CD4-positive, alpha-beta memory T cell (primary cell): ENCODE measurements at regions of chr4 and their contacts with region 1.

Region 1: GRCh38 chr4:145936142-145936996 is 2.3 kb downstream of the ZNF827 start:
- DNase-seq: peak; percentile 62 to 83 (median 66)
- H3K4me3 ChIP-seq: peak overlapping the region; percentile 69 to 73
- H3K4me3 Mint-ChIP-seq: peak overlapping the region; percentile 91 to 99 (median 95)
- H3K27ac ChIP-seq: peak overlapping the region; percentile 39
- H3K27ac Mint-ChIP-seq: peak overlapping the region; percentile 86 to 95 (median 91)
- H3K4me1 ChIP-seq: peaks cover 15% of the 10 kb centered on the region
- H3K4me1 Mint-ChIP-seq: peaks cover 19 to 44% (median 27%) of the 10 kb centered on the region in 4 donors
- H3K27me3 ChIP-seq: no peaks in the 10 kb centered on the region
- H3K27me3 Mint-ChIP-seq: peaks cover 3 to 5% of the 10 kb centered on the region in 2 donors

Region 2: DNA sequence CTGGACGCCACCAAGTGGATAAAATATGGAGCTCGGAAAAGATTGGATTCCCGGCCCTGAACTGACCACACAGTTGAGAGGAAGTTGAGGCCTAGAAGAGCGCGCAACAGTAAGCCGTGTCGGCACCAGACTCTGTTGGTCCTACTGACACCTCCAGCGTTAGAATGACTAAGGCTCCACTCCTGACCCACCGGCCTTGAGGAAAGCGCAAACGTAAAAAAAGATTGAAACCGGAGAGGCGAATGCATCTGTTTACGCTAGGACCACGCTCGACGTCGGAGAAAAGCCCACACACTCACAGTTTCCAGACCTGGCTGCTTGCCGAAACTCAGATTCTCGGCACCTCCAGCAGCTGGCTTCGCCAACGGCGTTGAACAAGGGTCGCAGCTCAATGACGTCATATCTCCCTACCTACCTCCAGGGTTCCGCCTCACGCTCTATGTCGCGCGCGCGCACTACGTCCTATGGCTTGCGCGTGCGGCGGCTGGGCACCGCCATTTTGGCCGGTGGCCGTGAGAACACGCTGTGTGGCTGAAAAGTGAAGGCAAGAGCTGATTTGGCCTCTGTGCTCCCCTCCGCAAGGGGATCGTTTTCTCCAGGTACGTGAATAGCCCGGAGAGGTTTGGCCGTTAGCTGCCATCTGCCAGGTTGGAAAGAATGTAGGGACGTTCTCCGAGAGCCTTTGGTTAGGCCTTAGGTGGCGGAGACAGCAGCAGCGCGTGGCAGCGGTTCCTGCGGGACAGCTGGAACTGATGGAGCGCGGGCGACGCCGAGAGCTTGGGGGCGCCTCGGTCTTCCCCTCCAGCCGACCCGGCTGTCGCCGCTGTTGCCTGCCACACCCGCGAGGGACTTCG is 838.3 kb before region 1 on chr4 and contains the starts of genes ABCE1 and ANAPC10:
- CTCF ChIA-PET with region 1: no interaction called
- POLR2A ChIA-PET with region 1: interaction called, 5 read pairs
- intact Hi-C with region 1: loop called (anchors 2 kb)
- DNase-seq: peak; percentile 92 to 98 (median 95)
- H3K4me3 ChIP-seq: peak within 1 kb of the TSS; percentile 82 to 96
- H3K4me3 Mint-ChIP-seq: peak within 1 kb of the TSS; percentile 91 to 98 (median 97)
- H3K27ac ChIP-seq: peak within 1 kb of the TSS; percentile 83
- H3K27ac Mint-ChIP-seq: peak within 1 kb of the TSS; percentile 97 to 99 (median 99)
- H3K4me1 ChIP-seq: peaks cover 52% of the 10 kb centered on the region
- H3K4me1 Mint-ChIP-seq: peaks cover 20 to 47% (median 35%) of the 10 kb centered on the region in 4 donors
- H3K27me3 ChIP-seq: no peaks in the 10 kb centered on the region
- H3K27me3 Mint-ChIP-seq: no peaks in the 10 kb centered on the region
- total RNA-seq, gene ABCE1: 67.9 to 71.4 TPM
- total RNA-seq, gene ANAPC10: 14.8 to 15.7 TPM

Region 3: DNA sequence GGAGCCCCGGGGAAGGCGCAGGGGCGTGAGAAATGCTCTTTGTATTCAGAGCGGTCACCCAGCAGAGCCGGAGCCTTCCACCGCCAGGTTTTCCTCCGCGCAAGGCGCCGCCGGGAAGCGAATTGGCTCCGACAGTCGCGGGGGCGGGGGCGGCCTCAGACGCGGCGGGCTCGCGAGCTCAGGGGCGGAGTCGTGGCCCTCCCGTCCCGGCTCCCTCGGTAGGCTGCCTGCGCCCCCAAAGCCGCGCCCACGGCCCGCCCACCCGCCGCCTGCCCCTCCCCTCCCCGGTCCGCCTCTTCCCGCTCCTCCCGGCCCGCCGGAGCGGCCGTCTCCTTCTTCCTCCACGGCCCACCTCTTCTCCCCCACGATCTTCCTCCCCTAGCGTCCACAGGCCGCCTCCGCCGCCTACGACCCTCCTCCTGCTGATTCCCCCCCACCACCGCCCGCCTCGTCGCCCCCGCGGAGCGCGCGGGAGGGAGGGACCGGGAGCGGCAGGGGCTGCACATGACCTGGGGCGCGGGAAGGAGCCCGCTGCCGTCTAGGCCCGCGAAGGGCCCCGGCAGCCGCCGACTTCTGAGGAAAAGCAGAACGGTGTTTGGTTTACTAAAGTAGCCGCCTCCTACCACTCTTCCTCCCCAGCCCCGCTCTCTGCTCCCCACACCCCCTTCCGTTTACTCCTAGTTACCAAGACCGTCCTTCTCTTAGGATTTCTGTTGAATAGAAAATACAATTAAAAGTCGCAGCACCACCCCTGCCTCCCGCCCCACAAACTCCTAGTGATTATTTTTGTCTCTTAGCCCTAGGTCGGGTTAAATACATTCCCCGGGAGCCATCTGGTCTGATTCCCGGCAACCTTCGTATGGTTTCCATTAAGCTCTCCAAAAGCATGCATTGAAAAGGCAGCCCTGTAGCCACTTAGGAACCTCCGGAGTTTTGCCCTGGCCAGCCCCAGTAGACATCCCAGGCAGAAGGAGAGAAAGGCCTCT is 203.2 kb before region 1 on chr4:
- CTCF ChIA-PET with region 1: no interaction called
- POLR2A ChIA-PET with region 1: no interaction called
- intact Hi-C with region 1: loop called (anchors 5 kb)
- DNase-seq: peak; percentile 67 to 83 (median 69)
- H3K4me3 ChIP-seq: peak overlapping the region in 1 of 2 donors; percentile 45
- H3K4me3 Mint-ChIP-seq: peak overlapping the region; percentile 76 to 84 (median 81)
- H3K27ac ChIP-seq: peak overlapping the region; percentile 13
- H3K27ac Mint-ChIP-seq: peak overlapping the region in 5 of 7 donors; percentile 18 to 87 (median 52)
- H3K4me1 ChIP-seq: peaks cover 5% of the 10 kb centered on the region
- H3K4me1 Mint-ChIP-seq: peaks cover 4 to 31% (median 10%) of the 10 kb centered on the region in 4 donors
- H3K27me3 ChIP-seq: no peaks in the 10 kb centered on the region
- H3K27me3 Mint-ChIP-seq: peaks cover 9 to 10% of the 10 kb centered on the region in 2 donors

Region 4: GRCh38 chr4:145887241-145887991 is 49.0 kb before region 1 on chr4:
- CTCF ChIA-PET with region 1: no interaction called
- POLR2A ChIA-PET with region 1: no interaction called
- intact Hi-C with region 1: loop called (anchors 5 kb)
- DNase-seq: no peak
- H3K4me3 ChIP-seq: no peak overlapping the region
- H3K4me3 Mint-ChIP-seq: no peak overlapping the region
- H3K27ac ChIP-seq: no peak overlapping the region
- H3K27ac Mint-ChIP-seq: no peak overlapping the region
- H3K4me1 ChIP-seq: no peaks in the 10 kb centered on the region
- H3K4me1 Mint-ChIP-seq: peaks cover 0 to 3% (median 1%) of the 10 kb centered on the region in 4 donors
- H3K27me3 ChIP-seq: no peaks in the 10 kb centered on the region
- H3K27me3 Mint-ChIP-seq: no peaks in the 10 kb centered on the region

Region 5: DNA sequence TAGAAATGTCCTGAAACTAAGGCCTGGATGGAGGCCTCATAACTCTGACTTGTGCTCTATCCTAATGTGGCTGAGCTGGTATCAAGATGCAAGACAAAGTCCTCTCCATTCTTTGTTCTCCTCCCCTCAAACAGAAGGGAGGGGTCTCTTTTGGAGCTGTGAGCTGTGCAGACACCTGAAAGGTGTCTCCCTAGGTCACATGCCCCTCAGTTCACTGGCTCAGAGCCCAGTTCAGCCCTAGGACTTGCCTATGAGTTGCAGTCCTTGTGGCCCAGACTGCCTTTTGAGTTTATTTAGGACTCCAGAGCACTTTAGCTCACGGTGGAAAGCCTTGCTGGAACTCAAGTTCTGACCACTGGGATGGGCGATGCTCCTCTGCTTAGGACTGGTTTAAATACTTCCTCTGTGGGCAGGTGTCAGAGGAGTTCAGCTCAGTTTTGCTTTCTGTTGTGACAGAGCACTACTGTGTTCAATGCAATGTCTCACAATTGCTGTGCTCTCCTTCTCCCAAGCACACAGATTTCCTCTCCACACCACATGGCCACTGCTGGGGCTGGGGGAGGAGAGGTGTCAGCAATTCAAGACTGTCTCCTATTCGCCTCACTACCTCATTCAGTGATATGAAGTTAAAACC is 87.1 kb after region 1 on chr4:
- CTCF ChIA-PET with region 1: no interaction called
- POLR2A ChIA-PET with region 1: no interaction called
- intact Hi-C with region 1: no loop called
- DNase-seq: no peak
- H3K4me3 ChIP-seq: no peak overlapping the region
- H3K4me3 Mint-ChIP-seq: no peak overlapping the region
- H3K27ac ChIP-seq: no peak overlapping the region
- H3K27ac Mint-ChIP-seq: no peak overlapping the region
- H3K4me1 ChIP-seq: no peaks in the 10 kb centered on the region
- H3K4me1 Mint-ChIP-seq: no peaks in the 10 kb centered on the region
- H3K27me3 ChIP-seq: no peaks in the 10 kb centered on the region
- H3K27me3 Mint-ChIP-seq: peaks cover 14 to 15% of the 10 kb centered on the region in 2 donors

Region 6: GRCh38 chr4:146510942-146511341 is 574.6 kb after region 1 on chr4:
- CTCF ChIA-PET with region 1: no interaction called
- POLR2A ChIA-PET with region 1: no interaction called
- intact Hi-C with region 1: no loop called
- DNase-seq: no peak
- H3K4me3 ChIP-seq: no peak overlapping the region
- H3K4me3 Mint-ChIP-seq: no peak overlapping the region
- H3K27ac ChIP-seq: no peak overlapping the region
- H3K27ac Mint-ChIP-seq: no peak overlapping the region
- H3K4me1 ChIP-seq: no peaks in the 10 kb centered on the region
- H3K4me1 Mint-ChIP-seq: peaks cover 0 to 5% (median 3%) of the 10 kb centered on the region in 4 donors
- H3K27me3 ChIP-seq: no peaks in the 10 kb centered on the region
- H3K27me3 Mint-ChIP-seq: no peaks in the 10 kb centered on the region

Region 7: GRCh38 chr4:146522098-146522868 is 585.9 kb after region 1 on chr4:
- CTCF ChIA-PET with region 1: interaction called, 4 read pairs
- POLR2A ChIA-PET with region 1: no interaction called
- intact Hi-C with region 1: loop called (anchors 5 kb)
- DNase-seq: peak; percentile 77 to 83 (median 79)
- H3K4me3 ChIP-seq: peak overlapping the region; percentile 85 to 100
- H3K4me3 Mint-ChIP-seq: no peak overlapping the region
- H3K27ac ChIP-seq: peak overlapping the region; percentile 71
- H3K27ac Mint-ChIP-seq: peak overlapping the region in 2 of 7 donors; percentile 68 to 90
- H3K4me1 ChIP-seq: peaks cover 36% of the 10 kb centered on the region
- H3K4me1 Mint-ChIP-seq: peaks cover 17 to 33% (median 26%) of the 10 kb centered on the region in 4 donors
- H3K27me3 ChIP-seq: no peaks in the 10 kb centered on the region
- H3K27me3 Mint-ChIP-seq: no peaks in the 10 kb centered on the region

Region 8: GRCh38 chr4:147731580-147732517 is 1795.5 kb after region 1 on chr4 and contains the start of gene ARHGAP10:
- CTCF ChIA-PET with region 1: no interaction called
- POLR2A ChIA-PET with region 1: no interaction called
- intact Hi-C with region 1: loop called (anchors 5 kb)
- DNase-seq: peak; percentile 57 to 79 (median 65)
- H3K4me3 ChIP-seq: peak within 1 kb of the TSS; percentile 76 to 84
- H3K4me3 Mint-ChIP-seq: peak within 1 kb of the TSS; percentile 90 to 97 (median 93)
- H3K27ac ChIP-seq: peak within 1 kb of the TSS; percentile 57
- H3K27ac Mint-ChIP-seq: peak within 1 kb of the TSS; percentile 91 to 97 (median 94)
- H3K4me1 ChIP-seq: peaks cover 26% of the 10 kb centered on the region
- H3K4me1 Mint-ChIP-seq: peaks cover 30 to 47% (median 42%) of the 10 kb centered on the region in 4 donors
- H3K27me3 ChIP-seq: no peaks in the 10 kb centered on the region
- H3K27me3 Mint-ChIP-seq: no peaks in the 10 kb centered on the region
- total RNA-seq, gene ARHGAP10: 8.2 to 8.3 TPM